ENCODE measurements at regions of chr10 and their contacts with region 1.

Region 1: GRCh38 chr10:58350619-58351323 is 16.0 kb downstream of the UBE2D1 start:
- DNase-seq: peak; percentile 57
- ATAC-seq: peak; percentile 81
- H3K4me3 ChIP-seq: no peak overlapping the region
- H3K27ac ChIP-seq: no peak overlapping the region
- H3K4me1 ChIP-seq: peaks cover 6% of the 10 kb centered on the region
- H3K27me3 ChIP-seq: no peaks in the 10 kb centered on the region
- CTCF ChIP-seq: no peak
- POLR2A ChIP-seq: no peak
- RAD21 ChIP-seq: no peak

Region 2: GRCh38 chr10:58269606-58270290 is 81.0 kb before region 1 on chr10:
- CTCF ChIA-PET with region 1: no interaction called
- POLR2A ChIA-PET with region 1: no interaction called
- dilution Hi-C with region 1: no loop called
- in situ Hi-C with region 1: no loop called
- intact Hi-C with region 1: no loop called
- DNase-seq: peak; percentile 73
- ATAC-seq: no peak
- H3K4me3 ChIP-seq: peak overlapping the region; percentile 64
- H3K27ac ChIP-seq: peak overlapping the region; percentile 57
- H3K4me1 ChIP-seq: peaks cover 2% of the 10 kb centered on the region; the same call in 1 of the 2 replicates
- H3K27me3 ChIP-seq: no peaks in the 10 kb centered on the region
- CTCF ChIP-seq: no peak
- POLR2A ChIP-seq: no peak
- RAD21 ChIP-seq: no peak

Region 3: DNA sequence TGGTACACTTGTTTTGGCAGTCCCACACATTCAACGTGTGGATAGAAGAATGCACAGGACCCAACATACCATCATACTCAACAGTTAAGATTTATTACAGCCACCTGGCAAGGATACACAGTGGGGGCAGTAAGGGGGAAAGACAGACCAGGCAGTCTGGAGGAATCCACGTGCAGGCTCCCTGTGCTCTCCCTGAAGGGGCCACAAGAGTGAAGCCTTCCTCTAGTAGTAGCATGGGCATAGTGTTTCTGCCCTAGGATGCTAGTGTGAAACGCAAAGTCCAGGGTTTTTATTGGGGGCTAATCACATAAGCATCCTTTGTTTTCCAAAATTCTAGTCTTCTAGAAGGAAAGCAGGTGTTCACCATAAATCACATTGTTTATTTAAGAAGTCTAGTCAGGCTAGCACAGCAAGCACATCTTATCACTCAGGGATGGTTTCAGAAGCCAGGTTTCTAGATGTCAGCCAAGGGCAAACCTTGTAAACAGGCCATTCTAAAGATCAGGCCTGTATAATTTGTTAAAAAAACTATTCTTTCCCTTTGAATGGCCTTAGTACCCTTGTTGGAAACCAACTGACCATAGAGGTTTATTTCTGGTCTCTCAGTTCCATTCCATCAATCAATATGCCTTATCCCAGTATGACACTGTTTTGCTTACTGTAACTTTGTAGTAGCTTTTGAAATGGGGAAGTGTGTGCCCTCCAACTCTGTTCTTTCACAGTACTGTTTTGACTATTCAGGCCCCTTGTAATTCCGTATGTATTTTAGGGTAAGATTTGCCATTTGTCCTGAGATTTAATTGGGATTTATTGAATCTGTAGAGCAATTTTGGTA is 22.1 kb after region 1 on chr10:
- CTCF ChIA-PET with region 1: interaction called, 10 read pairs
- POLR2A ChIA-PET with region 1: no interaction called
- dilution Hi-C with region 1: no loop called
- in situ Hi-C with region 1: no loop called
- intact Hi-C with region 1: no loop called
- DNase-seq: no peak
- ATAC-seq: no peak
- H3K4me3 ChIP-seq: no peak overlapping the region
- H3K27ac ChIP-seq: no peak overlapping the region
- H3K4me1 ChIP-seq: no peaks in the 10 kb centered on the region
- H3K27me3 ChIP-seq: no peaks in the 10 kb centered on the region
- CTCF ChIP-seq: no peak
- POLR2A ChIP-seq: no peak
- RAD21 ChIP-seq: no peak

Measured in IMR-90 (cell line).